Activated CD8-positive, alpha-beta T cell treated with anti-CD3 and anti-CD28 coated beads, Interleukin-2, amount 10 ng/mL, durations not matched to agents 7 days and 5 days (primary cell): ENCODE measurements at regions of chr7 and their contacts with region 1.

Region 1: GRCh38 chr7:105849122-105849855 is 27.1 kb downstream of the ATXN7L1 start:
- DNase-seq: peak; percentile 81
- ATAC-seq: peak; percentile 94
- H3K4me3 Mint-ChIP-seq: peak overlapping the region; percentile 49
- H3K27ac Mint-ChIP-seq: peak overlapping the region; percentile 91
- H3K4me1 Mint-ChIP-seq: peaks cover 49% of the 10 kb centered on the region
- H3K27me3 Mint-ChIP-seq: peaks cover 3% of the 10 kb centered on the region

Region 2: DNA sequence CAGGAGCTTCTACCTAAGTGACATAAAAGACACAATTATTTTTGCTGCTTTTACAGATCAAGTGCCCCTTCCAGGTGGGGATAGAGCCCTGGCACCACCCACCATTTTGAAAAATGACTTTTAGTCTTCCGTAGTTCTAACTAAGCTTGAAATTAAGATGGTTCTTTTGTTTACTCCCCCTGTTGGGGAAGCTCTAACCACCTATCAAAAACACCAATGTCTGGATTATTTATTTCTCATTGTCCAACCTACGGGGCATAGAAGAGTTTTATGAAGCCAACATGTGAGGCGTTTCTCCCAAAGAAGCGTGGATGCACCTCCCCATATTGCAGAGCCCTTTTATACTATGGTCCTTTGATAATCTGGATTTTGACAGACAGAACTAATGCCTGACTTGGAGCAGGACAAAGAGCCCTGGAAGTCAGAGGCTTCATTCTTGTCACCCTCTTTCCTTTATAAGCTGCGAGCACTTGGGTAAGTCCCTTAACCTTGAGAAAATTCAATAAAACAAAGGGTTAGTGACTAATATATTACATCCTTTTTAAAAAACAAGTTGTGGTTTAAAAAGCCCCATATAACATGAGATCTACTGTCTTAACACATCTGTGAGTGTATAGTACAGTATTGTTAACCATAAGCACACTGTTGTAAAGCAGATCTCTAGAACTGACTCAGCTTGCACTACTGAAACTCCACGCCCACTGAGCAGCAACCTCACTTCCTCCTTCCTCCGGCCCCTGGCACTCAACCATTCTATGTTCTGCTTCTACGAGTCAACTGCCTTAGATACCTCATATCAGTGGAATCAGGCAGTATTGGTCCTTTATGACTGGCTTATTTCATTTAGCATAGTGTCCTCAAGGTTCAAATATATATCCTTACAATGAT is 40.3 kb before region 1 on chr7:
- CTCF ChIA-PET with region 1: interaction called, 10 read pairs
- POLR2A ChIA-PET with region 1: interaction called, 7 read pairs
- DNase-seq: peak; percentile 86
- ATAC-seq: peak; percentile 97
- H3K4me3 Mint-ChIP-seq: peak overlapping the region; percentile 4
- H3K27ac Mint-ChIP-seq: peak overlapping the region; percentile 76
- H3K4me1 Mint-ChIP-seq: peaks cover 54% of the 10 kb centered on the region
- H3K27me3 Mint-ChIP-seq: no peaks in the 10 kb centered on the region